ENCODE measurements at regions of chr19 and their contacts with region 1.

Region 1: DNA sequence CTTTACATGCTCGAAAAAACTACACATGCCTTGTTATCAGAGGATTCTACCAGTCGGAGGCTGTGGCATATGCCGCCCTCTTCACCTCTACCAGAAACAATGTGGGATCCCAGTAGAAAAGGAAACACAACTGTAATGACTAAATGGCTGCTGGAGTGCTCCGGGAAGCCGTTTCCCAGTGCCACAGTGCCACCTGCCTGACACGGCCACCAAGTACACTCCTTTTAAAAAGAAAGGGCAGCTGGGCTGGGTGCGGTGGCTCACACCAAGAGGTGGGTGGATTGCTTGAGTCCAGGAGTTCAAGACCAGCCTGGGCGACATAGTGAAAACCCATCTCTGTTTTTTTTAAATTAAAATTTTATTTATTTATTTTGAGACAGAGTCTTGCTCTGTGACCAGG is 67.3 kb downstream of the TRPM4 start:
- DNase-seq: peak in 1 of 2 donors; percentile 30
- ATAC-seq: peak; percentile 29 to 46
- H3K4me3 ChIP-seq: no peak overlapping the region
- H3K27ac ChIP-seq: no peak overlapping the region
- H3K4me1 ChIP-seq: no peaks in the 10 kb centered on the region
- H3K27me3 ChIP-seq: no peaks in the 10 kb centered on the region
- CTCF ChIP-seq: peak in 4 of 5 experiments; percentile 37 to 47 (median 45)
- POLR2A ChIP-seq: no peak

Region 2: GRCh38 chr19:49186108-49186507 is 38.7 kb before region 1 on chr19:
- in situ Hi-C with region 1: no loop called
- intact Hi-C with region 1: no loop called
- DNase-seq: no peak
- ATAC-seq: no peak
- H3K4me3 ChIP-seq: no peak overlapping the region
- H3K27ac ChIP-seq: no peak overlapping the region
- H3K4me1 ChIP-seq: no peaks in the 10 kb centered on the region
- H3K27me3 ChIP-seq: no peaks in the 10 kb centered on the region
- CTCF ChIP-seq: no peak
- POLR2A ChIP-seq: no peak

Region 3: DNA sequence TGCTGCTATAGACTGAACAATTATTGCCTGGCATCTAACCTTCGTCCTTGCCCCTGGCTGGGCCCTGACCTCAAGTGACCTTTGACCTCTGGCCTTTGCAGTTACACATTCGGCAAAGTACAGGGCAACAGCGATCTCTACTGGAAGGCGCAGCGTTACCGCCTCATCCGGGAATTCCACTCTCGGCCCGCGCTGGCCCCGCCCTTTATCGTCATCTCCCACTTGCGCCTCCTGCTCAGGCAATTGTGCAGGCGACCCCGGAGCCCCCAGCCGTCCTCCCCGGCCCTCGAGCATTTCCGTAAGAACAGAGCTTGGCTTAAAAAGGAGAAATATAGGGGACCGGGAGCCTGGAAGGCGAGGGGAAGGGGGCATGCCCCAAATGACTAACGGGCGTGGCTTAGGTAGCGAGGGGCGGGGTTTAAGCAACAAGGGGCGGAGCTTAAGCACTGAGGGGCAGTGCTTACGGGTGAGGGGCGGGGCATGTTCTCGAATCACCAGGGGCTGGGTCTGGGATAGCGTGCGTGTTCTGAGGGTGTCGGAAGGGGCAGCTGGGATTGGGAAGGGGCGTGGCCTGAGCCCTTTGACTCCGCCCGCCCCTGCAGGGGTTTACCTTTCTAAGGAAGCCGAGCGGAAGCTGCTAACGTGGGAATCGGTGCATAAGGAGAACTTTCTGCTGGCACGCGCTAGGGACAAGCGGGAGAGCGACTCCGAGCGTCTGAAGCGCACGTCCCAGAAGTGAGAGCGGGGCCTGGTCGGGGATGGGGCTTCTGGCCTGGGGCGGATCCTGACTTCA is 14.6 kb before region 1 on chr19:
- in situ Hi-C with region 1: no loop called
- intact Hi-C with region 1: no loop called
- DNase-seq: no peak
- ATAC-seq: no peak
- H3K4me3 ChIP-seq: no peak overlapping the region
- H3K27ac ChIP-seq: no peak overlapping the region
- H3K4me1 ChIP-seq: peaks cover 3 to 6% of the 10 kb centered on the region in 2 donors
- H3K27me3 ChIP-seq: no peaks in the 10 kb centered on the region
- CTCF ChIP-seq: no peak
- POLR2A ChIP-seq: no peak

Region 4: GRCh38 chr19:49301165-49301865 is 76.5 kb after region 1 on chr19:
- in situ Hi-C with region 1: no loop called
- intact Hi-C with region 1: loop called (anchors 1 kb)
- DNase-seq: peak; percentile 27 to 41
- ATAC-seq: peak in 1 of 2 donors; percentile 58
- H3K4me3 ChIP-seq: no peak overlapping the region
- H3K27ac ChIP-seq: no peak overlapping the region
- H3K4me1 ChIP-seq: no peaks in the 10 kb centered on the region
- H3K27me3 ChIP-seq: no peaks in the 10 kb centered on the region
- CTCF ChIP-seq: peak; percentile 29 to 78 (median 66)
- POLR2A ChIP-seq: no peak

Region 5: GRCh38 chr19:49421039-49421877 is 196.4 kb after region 1 on chr19:
- in situ Hi-C with region 1: no loop called
- intact Hi-C with region 1: no loop called
- DNase-seq: no peak
- ATAC-seq: no peak
- H3K4me3 ChIP-seq: peak overlapping the region in 1 of 4 donors; percentile 10
- H3K27ac ChIP-seq: no peak overlapping the region
- H3K4me1 ChIP-seq: peaks cover 13 to 21% of the 10 kb centered on the region in 2 donors
- H3K27me3 ChIP-seq: peaks cover 80 to 95% (median 86%) of the 10 kb centered on the region in 3 donors
- CTCF ChIP-seq: no peak
- POLR2A ChIP-seq: no peak